OCI-LY7 (cell line): ENCODE measurements at regions of chr4 and their contacts with region 1.

Region 1: GRCh38 chr4:85658766-85659439 is 184.0 kb downstream of the ARHGAP24 start:
- DNase-seq: peak; percentile 67
- H3K4me3 ChIP-seq: no peak overlapping the region
- H3K27ac ChIP-seq: peak overlapping the region; percentile 94
- H3K4me1 ChIP-seq: peaks cover 42% of the 10 kb centered on the region
- CTCF ChIP-seq: peak; percentile 82

Region 2: GRCh38 chr4:85147439-85148076 is 511.3 kb before region 1 on chr4:
- CTCF ChIA-PET with region 1: no interaction called
- POLR2A ChIA-PET with region 1: no interaction called
- intact Hi-C with region 1: loop called (anchors 5 kb)
- DNase-seq: peak; percentile 61
- H3K4me3 ChIP-seq: no peak overlapping the region
- H3K27ac ChIP-seq: no peak overlapping the region
- H3K4me1 ChIP-seq: no peaks in the 10 kb centered on the region
- CTCF ChIP-seq: peak; percentile 82

Region 3: GRCh38 chr4:85457752-85458467 is 201.0 kb before region 1 on chr4:
- CTCF ChIA-PET with region 1: no interaction called
- POLR2A ChIA-PET with region 1: no interaction called
- intact Hi-C with region 1: no loop called
- DNase-seq: no peak
- H3K4me3 ChIP-seq: no peak overlapping the region
- H3K27ac ChIP-seq: no peak overlapping the region
- H3K4me1 ChIP-seq: no peaks in the 10 kb centered on the region
- CTCF ChIP-seq: no peak

Region 4: GRCh38 chr4:85474818-85475630 is 183.9 kb before region 1 on chr4 and contains the start of gene ARHGAP24:
- CTCF ChIA-PET with region 1: no interaction called
- POLR2A ChIA-PET with region 1: no interaction called
- intact Hi-C with region 1: loop called (anchors 2 kb)
- DNase-seq: peak; percentile 32
- H3K4me3 ChIP-seq: peak within 1 kb of the TSS; percentile 60
- H3K27ac ChIP-seq: no peak within 1 kb of the TSS
- H3K4me1 ChIP-seq: no peaks in the 10 kb centered on the region
- CTCF ChIP-seq: no peak
- total RNA-seq, gene ARHGAP24: 0.75 and 0.88 TPM in 2 replicates

Region 5: DNA sequence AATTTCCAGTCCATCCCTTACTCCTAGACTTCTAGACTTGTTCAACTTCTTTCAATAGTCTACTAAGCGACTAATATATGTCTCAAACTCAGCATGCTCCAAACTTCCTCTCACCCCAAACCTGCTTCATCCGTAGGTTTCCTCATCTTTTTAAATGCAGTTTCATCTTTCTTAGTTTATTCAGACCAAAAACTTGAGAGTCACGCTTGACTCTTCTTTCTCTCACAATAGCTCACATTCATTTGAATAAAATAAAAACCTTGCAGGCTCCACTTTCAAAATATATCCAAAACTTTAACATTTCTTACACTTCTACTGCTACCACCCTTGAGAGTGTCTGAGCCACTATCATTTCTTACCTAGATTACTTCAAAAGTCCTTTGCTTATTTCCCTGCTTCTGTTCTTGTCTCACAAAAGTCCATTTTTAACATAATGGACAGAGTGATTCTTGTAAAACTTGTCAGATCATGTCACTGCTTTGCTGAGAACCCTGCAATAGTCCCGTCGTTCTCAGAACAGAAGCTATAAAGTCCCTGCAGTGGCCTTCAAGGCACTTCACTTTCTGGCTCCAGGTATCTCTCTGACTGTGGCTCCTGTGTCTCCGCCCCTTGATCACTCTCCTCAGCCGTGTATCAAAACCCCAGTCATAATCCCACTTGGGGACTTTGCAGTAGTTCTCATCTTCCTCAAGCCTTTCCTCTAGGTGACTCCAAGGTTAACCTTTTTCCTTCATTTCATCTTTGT is 16.4 kb before region 1 on chr4:
- CTCF ChIA-PET with region 1: no interaction called
- POLR2A ChIA-PET with region 1: interaction called, 16 read pairs
- intact Hi-C with region 1: no loop called
- DNase-seq: no peak
- H3K4me3 ChIP-seq: no peak overlapping the region
- H3K27ac ChIP-seq: no peak overlapping the region
- H3K4me1 ChIP-seq: no peaks in the 10 kb centered on the region
- CTCF ChIP-seq: no peak

Region 6: DNA sequence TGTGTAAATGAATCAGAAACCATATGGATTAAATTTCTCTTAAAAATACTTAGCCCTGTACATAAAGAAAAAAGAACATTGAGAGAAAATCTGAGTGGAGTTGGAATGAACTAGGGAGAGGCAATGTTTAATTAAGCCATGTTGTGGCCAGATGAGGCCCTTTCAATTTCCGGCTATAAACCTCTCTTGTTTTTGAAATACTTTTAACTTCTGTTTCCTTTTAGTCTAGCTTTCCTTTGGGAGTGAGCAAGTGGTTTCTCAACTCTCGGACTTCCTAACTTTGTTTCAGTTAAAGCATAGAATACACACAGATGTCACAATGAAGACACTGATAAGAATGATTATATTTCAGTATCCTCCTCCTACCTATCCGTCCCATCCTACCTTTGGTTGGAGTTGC is 13.2 kb after region 1 on chr4:
- CTCF ChIA-PET with region 1: interaction called, 4 read pairs
- POLR2A ChIA-PET with region 1: interaction called, 11 read pairs
- intact Hi-C with region 1: no loop called
- DNase-seq: peak; percentile 12
- H3K4me3 ChIP-seq: no peak overlapping the region
- H3K27ac ChIP-seq: no peak overlapping the region
- H3K4me1 ChIP-seq: peaks cover 32% of the 10 kb centered on the region
- CTCF ChIP-seq: no peak

Region 7: DNA sequence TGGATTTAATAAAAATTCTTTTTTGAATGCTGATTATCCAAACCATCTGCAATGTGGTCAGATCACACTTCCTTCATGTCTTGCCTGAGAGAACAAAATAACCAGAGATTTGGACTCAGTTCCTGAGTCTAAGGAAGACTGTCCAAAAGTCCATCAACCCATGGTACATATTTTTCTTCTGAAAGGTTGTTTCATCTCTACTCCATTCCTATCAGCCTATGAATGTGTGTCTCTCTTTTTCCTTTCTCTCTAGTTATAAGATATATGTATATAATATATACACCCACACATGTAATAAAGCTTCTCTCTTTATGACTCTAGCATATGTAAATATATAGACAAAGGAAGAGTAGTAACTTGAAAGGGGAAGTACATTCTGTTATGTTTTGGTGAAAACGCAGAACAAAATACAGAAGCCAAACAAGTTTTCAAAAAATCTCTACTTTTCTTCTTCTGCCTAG is 43.0 kb after region 1 on chr4:
- CTCF ChIA-PET with region 1: no interaction called
- POLR2A ChIA-PET with region 1: interaction called, 9 read pairs
- intact Hi-C with region 1: loop called (anchors 1 kb)
- DNase-seq: peak; percentile 89
- H3K4me3 ChIP-seq: peak overlapping the region; percentile 37
- H3K27ac ChIP-seq: peak overlapping the region; percentile 99
- H3K4me1 ChIP-seq: peaks cover 59% of the 10 kb centered on the region
- CTCF ChIP-seq: no peak

Region 8: GRCh38 chr4:85734424-85734831 is 75.5 kb after region 1 on chr4:
- CTCF ChIA-PET with region 1: no interaction called
- POLR2A ChIA-PET with region 1: interaction called, 3 read pairs
- intact Hi-C with region 1: loop called (anchors 5 kb)
- DNase-seq: no peak
- H3K4me3 ChIP-seq: no peak overlapping the region
- H3K27ac ChIP-seq: no peak overlapping the region
- H3K4me1 ChIP-seq: peaks cover 26% of the 10 kb centered on the region
- CTCF ChIP-seq: no peak